ENCODE measurements at regions of chr9 and their contacts with region 1.

Region 1: DNA sequence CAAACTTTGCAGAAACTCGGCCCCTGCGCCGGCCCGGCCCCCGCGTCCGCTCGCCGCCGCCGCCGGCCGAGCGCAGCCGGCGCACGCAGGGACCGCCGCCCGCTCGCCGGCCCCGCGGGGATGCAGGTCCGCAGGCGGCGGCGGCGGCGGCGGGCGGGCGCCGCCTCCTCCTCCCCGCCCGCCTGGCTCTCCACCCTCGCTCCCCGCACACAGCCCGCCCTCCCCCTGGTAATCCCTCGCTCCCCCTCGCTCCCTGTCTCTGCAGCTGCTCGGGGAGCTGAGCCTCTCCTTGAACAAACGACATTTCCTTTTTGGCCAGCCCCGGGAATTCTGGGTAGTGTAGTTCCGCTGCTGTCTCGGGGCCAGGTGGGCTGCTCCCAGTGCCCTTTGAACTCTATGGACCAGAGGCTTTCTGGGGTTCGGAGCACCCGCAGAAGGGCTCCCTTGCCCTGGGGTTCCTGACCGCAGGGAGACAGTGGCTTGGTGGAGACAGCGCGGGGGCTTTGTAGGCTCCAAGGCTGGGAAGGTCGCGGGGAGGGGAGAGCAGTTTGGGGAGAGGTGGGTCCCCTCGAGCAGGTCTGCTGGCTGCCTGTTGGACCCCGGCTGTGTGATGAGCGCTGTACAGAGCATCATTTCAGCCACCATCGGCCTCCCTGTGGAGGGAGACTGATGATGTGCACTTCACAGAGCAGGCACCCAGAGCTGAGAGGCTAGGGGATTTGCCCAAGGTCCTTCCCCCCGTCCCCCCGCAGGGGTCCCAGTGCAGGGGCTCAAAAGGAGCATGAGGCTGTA is 1.8 kb upstream of the FAM78A start:
- DNase-seq: peak; percentile 86
- H3K4me3 ChIP-seq: peak overlapping the region in 2 of 3 experiments; percentile 31 to 81
- H3K27ac ChIP-seq: no peak overlapping the region
- H3K4me1 ChIP-seq: peaks cover 30% of the 10 kb centered on the region
- H3K27me3 ChIP-seq: peaks cover 14 to 18% of the 10 kb centered on the region in 2 experiments
- CTCF ChIP-seq: no peak
- POLR2A ChIP-seq: no peak

Region 2: GRCh38 chr9:131178382-131178781 is 99.7 kb before region 1 on chr9:
- CTCF ChIA-PET with region 1: interaction called, 7 read pairs
- POLR2A ChIA-PET with region 1: no interaction called
- dilution Hi-C with region 1: no loop called
- intact Hi-C with region 1: loop called (anchors 1 kb)
- DNase-seq: peak; percentile 87
- H3K4me3 ChIP-seq: no peak overlapping the region
- H3K27ac ChIP-seq: no peak overlapping the region
- H3K4me1 ChIP-seq: no peaks in the 10 kb centered on the region
- H3K27me3 ChIP-seq: no peaks in the 10 kb centered on the region
- CTCF ChIP-seq: peak; percentile 89 to 94
- POLR2A ChIP-seq: no peak

Region 3: DNA sequence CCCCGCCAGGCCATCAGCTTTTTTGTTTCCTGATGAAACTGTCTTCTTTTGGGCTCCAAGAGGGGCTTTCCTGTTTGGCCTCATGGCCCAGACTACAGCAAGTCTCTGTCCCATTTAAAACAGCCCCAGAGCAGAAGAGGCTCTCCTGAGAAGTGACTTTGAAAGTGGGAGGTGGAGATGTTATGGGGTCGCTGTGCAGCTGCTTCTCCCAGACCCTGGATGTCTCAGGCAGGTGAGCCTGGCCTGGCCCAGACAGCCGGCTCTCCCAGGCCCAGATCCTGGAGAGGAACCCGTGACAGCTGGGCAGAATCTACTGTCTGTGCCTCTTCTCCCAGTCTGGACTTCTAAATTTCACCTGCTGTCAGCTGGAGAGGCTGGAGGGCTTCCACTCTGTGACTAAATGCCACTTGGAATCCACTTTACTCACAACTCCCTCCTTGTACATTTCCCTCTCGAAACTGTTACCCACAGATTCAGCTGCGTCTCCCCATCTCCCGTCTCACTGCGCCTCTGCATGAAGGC is 22.4 kb before region 1 on chr9:
- CTCF ChIA-PET with region 1: interaction called, 5 read pairs
- POLR2A ChIA-PET with region 1: interaction called, 10 read pairs
- dilution Hi-C with region 1: no loop called
- intact Hi-C with region 1: no loop called
- DNase-seq: no peak
- H3K4me3 ChIP-seq: no peak overlapping the region
- H3K27ac ChIP-seq: no peak overlapping the region
- H3K4me1 ChIP-seq: peaks cover 7% of the 10 kb centered on the region
- H3K27me3 ChIP-seq: no peaks in the 10 kb centered on the region
- CTCF ChIP-seq: no peak
- POLR2A ChIP-seq: no peak

Region 4: DNA sequence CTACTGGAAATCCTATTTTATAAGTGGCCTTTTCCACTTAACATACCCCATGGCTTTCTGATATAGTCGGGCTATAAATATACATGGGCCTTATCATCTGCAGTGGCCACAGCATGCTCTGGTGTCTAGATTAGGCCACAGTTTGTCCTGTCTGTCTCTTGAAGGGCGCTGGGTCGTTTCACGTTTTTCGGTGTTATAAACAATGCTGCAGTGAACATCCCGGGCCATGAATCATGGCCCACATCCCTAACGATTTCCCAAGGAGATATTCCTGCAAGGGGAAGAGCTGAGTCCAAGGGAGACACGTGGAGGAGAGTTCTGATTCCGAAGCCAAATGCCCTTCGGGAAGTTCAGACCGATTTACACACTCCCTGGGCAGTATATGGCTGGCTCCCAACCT is 19.8 kb after region 1 on chr9:
- CTCF ChIA-PET with region 1: no interaction called
- POLR2A ChIA-PET with region 1: no interaction called
- dilution Hi-C with region 1: no loop called
- intact Hi-C with region 1: no loop called
- DNase-seq: no peak
- H3K4me3 ChIP-seq: no peak overlapping the region
- H3K27ac ChIP-seq: no peak overlapping the region
- H3K4me1 ChIP-seq: no peaks in the 10 kb centered on the region
- H3K27me3 ChIP-seq: no peaks in the 10 kb centered on the region
- CTCF ChIP-seq: no peak
- POLR2A ChIP-seq: no peak

Region 5: DNA sequence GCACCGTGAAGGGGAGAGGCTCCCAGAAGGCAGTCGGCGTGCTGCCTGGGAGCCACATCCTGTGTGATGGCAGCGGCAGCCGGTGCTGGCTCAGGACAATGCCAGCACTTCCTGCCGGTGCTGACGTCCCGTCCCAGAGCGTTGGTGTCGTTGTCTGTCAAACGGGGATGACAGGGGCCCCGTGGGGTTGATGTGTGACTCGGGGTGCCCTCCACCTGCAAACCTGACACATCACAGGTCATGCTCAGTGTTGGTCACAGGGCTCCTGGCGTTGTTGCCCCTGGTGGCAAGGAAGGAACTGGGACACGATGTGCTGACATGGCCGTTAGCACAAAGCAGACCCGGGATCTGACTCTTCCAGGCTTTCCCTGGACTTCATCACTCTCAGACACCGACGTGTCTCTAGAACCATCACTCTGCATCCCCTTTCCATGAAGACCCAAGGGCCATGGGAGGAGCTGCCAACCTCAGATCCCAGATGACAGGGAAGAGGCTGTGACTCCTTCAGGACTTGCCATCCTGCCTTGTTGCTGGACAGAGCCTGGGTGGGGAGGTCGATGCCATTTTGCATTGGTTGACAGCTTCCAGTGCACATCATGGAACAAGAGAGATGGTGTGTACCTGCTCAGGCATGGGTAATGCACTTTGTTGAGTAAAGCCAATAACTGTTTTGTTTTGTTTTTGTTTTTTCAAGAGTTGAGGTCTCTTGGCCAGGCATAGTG is 32.9 kb after region 1 on chr9:
- CTCF ChIA-PET with region 1: no interaction called
- POLR2A ChIA-PET with region 1: no interaction called
- dilution Hi-C with region 1: no loop called
- intact Hi-C with region 1: no loop called
- DNase-seq: no peak
- H3K4me3 ChIP-seq: no peak overlapping the region
- H3K27ac ChIP-seq: no peak overlapping the region
- H3K4me1 ChIP-seq: no peaks in the 10 kb centered on the region
- H3K27me3 ChIP-seq: no peaks in the 10 kb centered on the region
- CTCF ChIP-seq: no peak
- POLR2A ChIP-seq: no peak

Region 6: GRCh38 chr9:131441441-131441840 is 163.3 kb after region 1 on chr9:
- CTCF ChIA-PET with region 1: no interaction called
- POLR2A ChIA-PET with region 1: no interaction called
- dilution Hi-C with region 1: no loop called
- intact Hi-C with region 1: no loop called
- DNase-seq: no peak
- H3K4me3 ChIP-seq: no peak overlapping the region
- H3K27ac ChIP-seq: no peak overlapping the region
- H3K4me1 ChIP-seq: peaks cover 5% of the 10 kb centered on the region
- H3K27me3 ChIP-seq: no peaks in the 10 kb centered on the region
- CTCF ChIP-seq: no peak
- POLR2A ChIP-seq: no peak